MCF 10A (cell line): ENCODE measurements at regions of chr12 and their contacts with region 1.

Region 1: DNA sequence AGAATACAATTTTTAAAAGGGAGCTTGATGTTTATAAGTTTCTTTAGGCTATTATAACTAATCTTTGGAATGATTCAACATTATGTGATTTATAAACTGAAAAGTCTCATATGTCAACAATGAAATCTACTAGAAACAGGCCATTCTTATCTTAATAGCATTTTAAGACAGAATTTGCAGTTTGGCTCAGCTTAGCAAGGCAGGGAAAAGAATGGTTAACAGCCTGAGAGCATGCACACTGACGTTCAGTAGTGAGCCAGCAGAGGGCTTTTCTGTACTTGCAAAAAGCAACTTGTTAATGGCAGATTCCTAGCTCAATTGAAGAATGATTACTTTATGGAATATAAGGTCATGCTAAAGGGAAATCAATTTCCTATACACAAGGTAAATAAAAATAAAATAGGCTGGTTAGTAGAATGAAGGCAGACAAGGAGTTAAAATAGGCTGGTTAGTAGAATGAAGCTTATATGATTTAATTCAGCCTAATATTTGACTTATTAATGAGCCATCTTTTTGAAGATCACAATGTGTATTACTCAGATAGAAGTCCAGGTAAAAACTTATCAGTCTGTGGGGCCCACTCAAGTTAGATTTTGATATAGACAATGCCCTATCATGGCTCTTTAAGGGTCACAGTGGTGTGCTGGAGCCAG is 95.9 kb downstream of the OTOGL start:
- DNase-seq: peak; percentile 54
- H3K4me3 Mint-ChIP-seq: no peak overlapping the region
- H3K27ac Mint-ChIP-seq: no peak overlapping the region
- H3K4me1 Mint-ChIP-seq: no peaks in the 10 kb centered on the region
- H3K27me3 Mint-ChIP-seq: no peaks in the 10 kb centered on the region
- CTCF ChIP-seq: peak; percentile 62

Region 2: DNA sequence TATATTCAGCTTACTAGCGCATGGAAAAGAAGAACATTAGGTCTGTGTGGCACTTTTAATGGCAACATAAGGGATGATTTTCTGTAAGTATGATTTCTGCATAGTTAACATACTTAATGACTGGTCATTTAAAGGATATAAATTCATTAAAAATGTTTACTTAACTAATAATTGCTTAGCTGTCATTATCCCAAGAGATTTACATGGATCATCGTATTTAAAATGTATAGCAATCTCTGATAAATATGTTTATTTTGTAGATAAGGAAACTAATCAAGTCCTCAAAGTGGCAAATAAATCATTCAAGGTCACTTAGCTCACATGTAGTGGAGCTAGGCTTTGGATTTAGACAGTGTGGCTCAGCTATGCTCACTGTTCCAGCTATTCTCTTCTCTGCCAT is 62.7 kb after region 1 on chr12:
- CTCF ChIA-PET with region 1: interaction called, 11 read pairs
- POLR2A ChIA-PET with region 1: no interaction called
- intact Hi-C with region 1: no loop called
- DNase-seq: no peak
- H3K4me3 Mint-ChIP-seq: no peak overlapping the region
- H3K27ac Mint-ChIP-seq: no peak overlapping the region
- H3K4me1 Mint-ChIP-seq: no peaks in the 10 kb centered on the region
- H3K27me3 Mint-ChIP-seq: peaks cover 29% of the 10 kb centered on the region
- CTCF ChIP-seq: no peak

Region 3: DNA sequence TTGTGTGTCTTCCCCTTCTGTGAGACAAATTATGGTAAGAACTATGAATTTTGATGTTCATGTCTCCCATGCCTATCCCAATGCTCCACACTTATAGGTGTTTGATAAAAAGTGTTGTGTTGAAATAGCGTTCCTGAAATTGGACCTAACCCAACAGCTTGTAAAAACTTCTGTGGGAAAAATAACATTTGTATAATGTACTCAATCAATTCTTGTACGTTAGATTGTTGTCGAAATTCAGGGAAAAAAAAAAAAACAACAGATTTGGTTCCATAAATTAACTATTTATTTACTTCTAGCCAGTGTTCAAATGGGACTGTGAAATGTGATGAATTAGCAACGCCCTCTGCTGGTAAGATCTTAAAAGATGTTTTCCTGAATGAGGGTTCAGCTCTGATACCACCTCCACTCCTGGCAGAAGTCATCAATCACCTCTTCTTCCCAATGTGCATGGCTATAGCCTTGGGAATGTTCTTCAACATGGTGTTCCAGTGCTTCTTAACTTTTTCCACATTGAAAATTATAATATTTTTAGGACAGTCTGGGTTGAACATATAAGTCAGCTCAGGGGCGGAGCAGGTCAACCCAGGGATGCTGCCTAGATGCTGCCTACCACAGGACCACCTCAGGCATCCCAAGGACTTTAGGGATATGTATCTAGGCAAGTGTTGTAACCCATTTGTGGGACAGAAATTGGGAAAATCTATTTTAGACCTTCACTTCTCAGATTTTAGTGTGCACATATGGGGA is 74.8 kb after region 1 on chr12:
- CTCF ChIA-PET with region 1: interaction called, 233 read pairs
- POLR2A ChIA-PET with region 1: interaction called, 13 read pairs
- intact Hi-C with region 1: loop called (anchors 1 kb)
- DNase-seq: peak; percentile 69
- H3K4me3 Mint-ChIP-seq: no peak overlapping the region
- H3K27ac Mint-ChIP-seq: no peak overlapping the region
- H3K4me1 Mint-ChIP-seq: peaks cover 23% of the 10 kb centered on the region
- H3K27me3 Mint-ChIP-seq: no peaks in the 10 kb centered on the region
- CTCF ChIP-seq: peak; percentile 68

Region 4: GRCh38 chr12:80299976-80300375 is 104.8 kb after region 1 on chr12:
- CTCF ChIA-PET with region 1: no interaction called
- POLR2A ChIA-PET with region 1: no interaction called
- intact Hi-C with region 1: no loop called
- DNase-seq: no peak
- H3K4me3 Mint-ChIP-seq: no peak overlapping the region
- H3K27ac Mint-ChIP-seq: no peak overlapping the region
- H3K4me1 Mint-ChIP-seq: no peaks in the 10 kb centered on the region
- H3K27me3 Mint-ChIP-seq: no peaks in the 10 kb centered on the region
- CTCF ChIP-seq: no peak

Region 5: DNA sequence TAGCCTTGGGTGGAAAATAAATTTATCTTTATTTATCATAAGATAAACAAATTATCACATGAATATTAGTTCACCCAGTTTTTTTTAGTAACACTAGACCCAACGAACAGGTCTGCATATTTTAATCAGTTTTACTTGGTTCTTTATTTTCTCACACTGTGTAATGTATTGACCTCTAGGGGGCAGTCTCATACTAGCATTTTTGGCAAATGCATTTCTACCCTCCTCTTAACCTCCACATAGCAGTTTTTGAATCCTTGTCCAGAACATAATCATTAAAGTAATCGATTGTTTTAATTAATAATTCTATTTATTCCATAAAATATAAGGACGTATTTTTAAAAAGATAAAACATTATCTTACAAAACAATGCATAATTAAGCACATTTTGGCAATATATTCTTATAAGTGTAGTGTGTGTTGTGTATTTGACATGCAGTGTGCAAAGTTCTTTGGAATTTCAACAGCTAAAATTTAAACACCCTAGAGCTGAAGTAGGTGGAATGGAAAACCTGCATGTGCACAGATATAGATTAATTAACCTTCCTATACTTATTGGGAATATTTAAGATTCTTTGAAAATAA is 217.3 kb after region 1 on chr12:
- CTCF ChIA-PET with region 1: interaction called, 3 read pairs
- POLR2A ChIA-PET with region 1: no interaction called
- intact Hi-C with region 1: loop called (anchors 10 kb)
- DNase-seq: peak; percentile 66
- H3K4me3 Mint-ChIP-seq: no peak overlapping the region
- H3K27ac Mint-ChIP-seq: no peak overlapping the region
- H3K4me1 Mint-ChIP-seq: no peaks in the 10 kb centered on the region
- H3K27me3 Mint-ChIP-seq: peaks cover 67% of the 10 kb centered on the region
- CTCF ChIP-seq: peak; percentile 66

Region 6: DNA sequence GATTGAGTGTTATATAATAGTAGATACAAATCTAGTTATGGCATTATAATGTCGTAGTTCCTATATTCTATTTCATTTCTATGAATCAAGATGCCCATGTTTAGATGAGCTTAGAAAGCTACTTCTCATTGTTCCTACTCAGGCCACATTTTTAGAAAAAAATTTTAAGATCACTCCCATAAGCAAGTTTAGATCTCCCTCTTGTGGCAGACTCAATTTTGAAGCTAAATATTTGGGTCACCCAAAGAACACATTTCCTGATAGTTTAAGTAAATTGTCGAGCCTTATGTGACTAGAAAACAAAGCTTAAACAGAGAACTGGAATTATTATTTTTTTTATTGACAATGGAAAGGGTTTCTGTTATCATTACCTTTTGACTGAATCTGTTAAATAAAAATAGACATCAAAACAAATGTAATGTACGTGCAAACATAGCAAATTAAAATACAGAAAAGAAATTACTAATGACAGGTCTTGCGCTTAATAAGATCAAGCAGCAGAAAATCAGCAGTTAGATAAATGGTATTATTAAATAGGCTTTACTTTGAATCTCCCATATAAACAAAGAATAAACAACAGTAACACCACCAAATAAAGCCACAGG is 1062.8 kb after region 1 on chr12:
- CTCF ChIA-PET with region 1: interaction called, 6 read pairs
- POLR2A ChIA-PET with region 1: no interaction called
- intact Hi-C with region 1: loop called (anchors 5 kb)
- DNase-seq: peak; percentile 55
- H3K4me3 Mint-ChIP-seq: no peak overlapping the region
- H3K27ac Mint-ChIP-seq: no peak overlapping the region
- H3K4me1 Mint-ChIP-seq: no peaks in the 10 kb centered on the region
- H3K27me3 Mint-ChIP-seq: peaks cover 76% of the 10 kb centered on the region
- CTCF ChIP-seq: peak; percentile 46